GM13976 (cell line): ENCODE measurements at regions of chr5 and their contacts with region 1.

Region 1: GRCh38 chr5:69093771-69094482 is at the start of gene SLC30A5:
- DNase-seq: peak; percentile 95
- CTCF ChIP-seq: peak; percentile 92

Region 2: GRCh38 chr5:68875351-68875750 is 218.6 kb before region 1 on chr5:
- in situ Hi-C with region 1: no loop called
- DNase-seq: no peak
- CTCF ChIP-seq: no peak

Region 3: DNA sequence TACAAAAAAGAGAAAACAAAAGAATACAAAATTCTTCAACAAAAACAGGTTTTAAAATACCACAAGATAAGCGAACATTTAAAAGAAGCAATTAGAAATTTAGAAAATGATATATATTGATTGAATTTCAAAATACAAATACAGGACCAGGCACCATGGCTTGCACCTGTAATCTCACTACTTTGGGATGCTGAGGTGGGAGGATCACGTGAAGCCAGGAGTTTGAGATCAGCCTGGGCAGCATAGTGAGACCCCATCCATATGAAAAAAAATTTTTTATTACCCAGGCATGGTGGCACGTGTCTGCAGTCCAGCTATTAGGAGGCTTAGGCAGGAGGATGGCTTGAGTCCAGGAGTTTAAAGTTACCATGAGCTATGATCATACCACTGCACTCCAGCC is 110.0 kb before region 1 on chr5:
- in situ Hi-C with region 1: no loop called
- DNase-seq: no peak
- CTCF ChIP-seq: no peak

Region 4: GRCh38 chr5:69369369-69370121 is 275.6 kb after region 1 on chr5 and contains the starts of genes AK6, RAD17 and TAF9:
- in situ Hi-C with region 1: loop called (anchors 25 kb)
- DNase-seq: peak; percentile 91
- CTCF ChIP-seq: no peak